GM12878 (cell line): ENCODE measurements at regions of chr13 and their contacts with region 1.

Region 1: DNA sequence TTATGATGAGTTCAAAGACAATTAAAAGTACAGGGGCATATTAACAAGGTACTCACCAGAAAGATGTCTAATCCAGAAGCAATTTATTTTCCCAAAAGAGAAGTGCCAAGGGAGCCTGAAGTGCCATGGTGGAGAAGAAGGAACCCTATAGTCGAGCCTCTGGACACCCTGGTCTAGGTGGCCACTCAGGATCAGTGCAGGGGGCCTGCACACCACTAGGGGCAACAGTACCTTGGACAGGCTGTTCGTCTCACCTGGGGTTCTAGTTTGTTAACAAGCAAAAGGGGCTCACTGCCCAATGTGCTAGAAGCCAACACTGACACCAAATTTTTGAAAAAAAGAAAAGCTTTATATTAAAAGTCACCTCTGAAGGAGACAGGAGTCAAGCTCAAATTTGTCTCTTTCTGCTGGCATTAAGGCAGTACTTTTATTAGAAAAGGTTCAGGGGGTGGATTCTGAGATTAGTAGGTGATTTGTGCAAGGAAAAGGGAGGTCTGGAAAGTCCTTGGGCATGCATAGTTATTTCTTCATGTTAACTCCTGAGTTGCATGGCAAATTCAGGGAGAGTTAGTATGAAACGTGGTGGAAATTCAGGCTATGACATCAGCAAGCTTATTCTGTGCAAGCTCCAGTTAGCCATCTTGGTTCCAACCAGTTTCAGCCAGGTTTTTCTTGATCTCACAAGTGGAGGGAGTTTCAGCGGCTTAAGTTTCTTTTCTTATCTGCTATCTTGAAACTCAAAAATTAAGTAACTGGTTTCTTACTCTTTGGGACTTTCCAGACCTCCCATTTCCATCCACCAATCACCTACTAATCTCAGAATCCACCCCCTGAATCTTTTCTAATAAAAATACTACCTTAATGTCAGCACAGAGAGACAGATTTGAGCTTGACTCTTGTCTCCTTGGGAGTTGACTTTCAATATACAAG is 884 bp upstream of the CBY2 start:
- DNase-seq: peak; percentile 93
- ATAC-seq: peak; percentile 81
- H3K4me3 ChIP-seq: peak overlapping the region; percentile 88
- H3K27ac ChIP-seq: peak overlapping the region; percentile 98
- H3K4me1 ChIP-seq: peaks cover 46% of the 10 kb centered on the region
- H3K27me3 ChIP-seq: no peaks in the 10 kb centered on the region
- CTCF ChIP-seq: peak; percentile 53 to 86 (median 85)
- EP300 ChIP-seq: no peak; a peak in 1 of 4 replicates
- POLR2A ChIP-seq: peak; percentile 82
- RAD21 ChIP-seq: peak; percentile 47

Region 2: GRCh38 chr13:45711951-45712350 is 10.7 kb after region 1 on chr13:
- CTCF ChIA-PET with region 1: interaction called, 40 read pairs
- POLR2A ChIA-PET with region 1: interaction called, 9 read pairs
- RAD21 ChIA-PET with region 1: interaction called, 24 read pairs
- SMC1A ChIA-PET with region 1: interaction called, 34 read pairs
- in situ Hi-C with region 1: no loop called
- intact Hi-C with region 1: no loop called
- DNase-seq: no peak
- ATAC-seq: no peak
- H3K4me3 ChIP-seq: no peak overlapping the region
- H3K27ac ChIP-seq: no peak overlapping the region
- H3K4me1 ChIP-seq: no peaks in the 10 kb centered on the region
- H3K27me3 ChIP-seq: no peaks in the 10 kb centered on the region
- CTCF ChIP-seq: no peak
- EP300 ChIP-seq: no peak
- POLR2A ChIP-seq: no peak
- RAD21 ChIP-seq: no peak

Region 3: DNA sequence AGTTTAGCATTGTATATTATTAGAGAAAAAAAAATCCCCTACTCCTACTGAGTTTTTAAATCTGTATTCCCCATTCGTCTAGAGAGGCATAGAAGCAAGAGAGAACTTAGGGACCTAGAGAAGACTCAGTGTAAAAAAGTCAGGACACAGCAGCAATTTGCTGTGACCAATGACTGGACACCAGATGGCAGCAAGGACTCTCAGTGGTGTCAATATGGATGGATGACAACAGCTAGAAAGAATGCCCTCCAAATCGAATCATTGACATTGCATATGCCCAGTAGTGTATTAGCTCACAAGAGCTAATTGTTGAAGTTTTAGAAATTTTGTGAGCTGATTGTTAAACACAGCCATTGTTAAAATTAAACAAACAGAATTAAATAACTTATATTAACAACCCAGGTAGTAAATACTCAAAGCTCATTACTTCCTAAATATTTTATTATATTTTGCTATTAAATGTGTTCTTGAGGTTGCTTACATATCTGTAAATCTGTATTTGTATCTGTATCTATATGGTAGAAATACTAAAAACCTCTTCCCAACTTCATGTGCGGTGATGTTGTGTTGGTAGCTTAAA is 106.4 kb after region 1 on chr13:
- CTCF ChIA-PET with region 1: no interaction called
- POLR2A ChIA-PET with region 1: no interaction called
- RAD21 ChIA-PET with region 1: no interaction called
- SMC1A ChIA-PET with region 1: no interaction called
- in situ Hi-C with region 1: no loop called
- intact Hi-C with region 1: no loop called
- DNase-seq: peak; percentile 8
- ATAC-seq: peak; percentile 93
- H3K4me3 ChIP-seq: no peak overlapping the region
- H3K27ac ChIP-seq: no peak overlapping the region
- H3K4me1 ChIP-seq: no peaks in the 10 kb centered on the region; the same call in 1 of the 2 replicates
- H3K27me3 ChIP-seq: no peaks in the 10 kb centered on the region
- CTCF ChIP-seq: peak; percentile 54 to 67 (median 58); a peak in 5 of 6 replicates
- EP300 ChIP-seq: no peak
- POLR2A ChIP-seq: no peak
- RAD21 ChIP-seq: peak; percentile 73

Region 4: DNA sequence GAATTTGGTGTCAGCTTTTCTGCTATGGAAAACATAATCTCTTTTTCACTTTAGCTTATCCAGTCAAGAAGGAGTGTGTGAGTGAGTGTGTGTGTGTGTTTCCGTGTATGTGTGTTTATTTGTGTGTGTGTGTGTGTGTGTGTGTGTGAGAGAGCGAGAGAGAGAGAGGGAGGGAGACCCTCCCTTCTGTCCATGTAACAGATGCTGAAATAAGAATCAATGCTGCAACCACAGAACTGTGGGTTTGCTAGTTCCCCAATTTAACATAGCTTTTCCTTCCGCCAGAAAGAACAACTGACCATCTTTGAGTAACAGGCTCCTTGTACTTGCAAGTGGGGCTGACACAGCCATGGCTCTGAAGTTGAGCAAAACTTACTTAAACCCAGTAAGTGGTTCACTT is 475.5 kb after region 1 on chr13:
- CTCF ChIA-PET with region 1: no interaction called
- POLR2A ChIA-PET with region 1: interaction called, 6 read pairs
- RAD21 ChIA-PET with region 1: interaction called, 5 read pairs
- SMC1A ChIA-PET with region 1: interaction called, 4 read pairs
- in situ Hi-C with region 1: loop called (anchors 10 kb)
- intact Hi-C with region 1: loop called (anchors 2 kb)
- DNase-seq: peak; percentile 79
- ATAC-seq: peak; percentile 35
- H3K4me3 ChIP-seq: peak overlapping the region; percentile 72
- H3K27ac ChIP-seq: peak overlapping the region; percentile 99
- H3K4me1 ChIP-seq: peaks cover 15% of the 10 kb centered on the region
- H3K27me3 ChIP-seq: no peaks in the 10 kb centered on the region
- CTCF ChIP-seq: no peak
- EP300 ChIP-seq: peak; percentile 48 to 52; a peak in 1 of 4 replicates
- POLR2A ChIP-seq: no peak
- RAD21 ChIP-seq: no peak